ENCODE measurements at regions of chr6 and their contacts with region 1.

Region 1: GRCh38 chr6:44172731-44173500 is 14.3 kb downstream of the CAPN11 start:
- DNase-seq: peak; percentile 90
- ATAC-seq: peak; percentile 94

Region 2: GRCh38 chr6:44237813-44238433 is 65.0 kb after region 1 on chr6:
- intact Hi-C with region 1: loop called (anchors 2 kb)
- DNase-seq: peak; percentile 90
- ATAC-seq: peak; percentile 75

Measured in left ventricle myocardium superior (tissue), 1 donor.